ENCODE measurements at regions of chr13 and their contacts with region 1.

Region 1: GRCh38 chr13:24727731-24728601 is 36.0 kb upstream of the RNF17 start:
- DNase-seq: peak; percentile 87
- CTCF ChIP-seq: peak; percentile 80

Region 2: GRCh38 chr13:24574847-24575246 is 153.1 kb before region 1 on chr13:
- CTCF ChIA-PET with region 1: interaction called, 21 read pairs
- POLR2A ChIA-PET with region 1: no interaction called
- DNase-seq: no peak
- CTCF ChIP-seq: no peak

Region 3: GRCh38 chr13:24693862-24694471 is 34.0 kb before region 1 on chr13:
- CTCF ChIA-PET with region 1: interaction called, 31 read pairs
- POLR2A ChIA-PET with region 1: no interaction called
- DNase-seq: peak; percentile 79
- CTCF ChIP-seq: peak; percentile 56

Region 4: DNA sequence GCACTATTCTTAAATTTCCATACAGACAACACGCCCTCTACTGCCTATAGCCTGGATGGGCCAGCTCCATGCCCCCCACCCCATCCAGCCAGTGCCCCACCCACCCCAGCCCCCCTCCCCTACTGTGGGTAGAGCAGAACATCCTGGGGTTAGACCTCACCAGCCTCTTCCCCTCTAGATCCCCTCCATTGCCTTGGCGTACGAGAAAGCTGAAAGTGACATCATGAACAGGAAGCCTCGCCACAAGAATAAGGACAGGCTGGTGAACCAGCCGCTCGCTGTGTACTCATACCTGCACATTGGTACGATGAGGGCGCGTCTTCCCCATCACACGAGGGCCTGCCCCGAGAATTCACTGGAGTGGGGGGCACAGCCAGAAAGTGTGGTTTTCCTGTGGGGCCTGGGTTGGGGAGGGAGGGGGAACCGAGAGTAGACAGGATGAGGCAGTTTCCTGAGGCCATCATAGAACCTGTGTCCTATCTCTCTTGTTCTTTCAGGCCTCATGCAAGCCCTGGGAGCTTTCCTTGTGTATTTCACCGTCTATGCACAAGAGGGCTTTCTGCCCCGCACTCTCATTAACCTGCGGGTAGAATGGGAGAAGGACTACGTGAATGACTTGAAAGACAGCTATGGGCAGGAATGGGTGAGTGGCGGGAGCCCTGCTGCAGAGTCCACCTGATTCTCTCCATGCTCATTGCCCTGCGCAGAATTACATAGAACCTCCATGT is 18.6 kb before region 1 on chr13:
- CTCF ChIA-PET with region 1: interaction called, 19 read pairs
- POLR2A ChIA-PET with region 1: no interaction called
- DNase-seq: peak; percentile 52
- CTCF ChIP-seq: no peak

Region 5: GRCh38 chr13:24741016-24741662 is 13.2 kb after region 1 on chr13:
- CTCF ChIA-PET with region 1: interaction called, 28 read pairs
- POLR2A ChIA-PET with region 1: no interaction called
- DNase-seq: peak; percentile 62
- CTCF ChIP-seq: peak; percentile 47

Region 6: DNA sequence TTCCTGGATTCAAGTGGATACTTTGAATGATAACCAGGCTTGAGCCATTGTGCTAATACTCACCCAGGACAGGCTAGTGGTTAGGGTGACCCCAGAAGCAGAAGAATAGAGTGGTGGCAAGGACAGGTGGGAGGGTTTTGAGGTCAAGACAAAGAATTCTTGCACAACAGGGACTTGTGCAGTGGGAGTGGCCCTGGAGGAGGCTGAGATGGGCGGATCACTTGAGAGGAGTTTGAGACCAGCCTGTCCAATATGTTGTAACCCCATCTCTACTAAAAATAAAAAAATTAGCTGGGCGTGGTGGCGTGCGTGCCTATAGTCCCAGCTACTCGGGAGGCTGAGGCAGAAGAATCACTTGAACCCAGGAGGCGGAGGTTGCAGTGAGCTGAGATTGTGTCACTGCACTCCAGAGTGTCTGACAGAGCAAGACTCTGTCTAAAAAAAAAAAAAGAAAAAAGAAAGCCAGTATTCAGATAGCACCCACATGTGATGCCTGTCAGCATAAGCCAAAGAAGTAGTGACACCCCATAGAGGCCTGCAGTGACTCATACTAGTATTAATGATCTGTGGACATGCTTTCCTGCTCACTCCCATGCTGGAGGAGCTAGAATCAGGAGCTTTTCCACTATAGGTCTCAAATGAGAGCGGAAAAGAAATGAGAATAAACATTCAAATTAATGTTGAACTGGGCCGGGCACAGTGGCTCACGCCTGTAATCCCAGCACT is 114.7 kb after region 1 on chr13:
- CTCF ChIA-PET with region 1: no interaction called
- POLR2A ChIA-PET with region 1: no interaction called
- DNase-seq: no peak
- CTCF ChIP-seq: no peak

Measured in GM10248 (cell line).